Calu3 (cell line): ENCODE measurements at regions of chr1 and their contacts with region 1.

Region 1: DNA sequence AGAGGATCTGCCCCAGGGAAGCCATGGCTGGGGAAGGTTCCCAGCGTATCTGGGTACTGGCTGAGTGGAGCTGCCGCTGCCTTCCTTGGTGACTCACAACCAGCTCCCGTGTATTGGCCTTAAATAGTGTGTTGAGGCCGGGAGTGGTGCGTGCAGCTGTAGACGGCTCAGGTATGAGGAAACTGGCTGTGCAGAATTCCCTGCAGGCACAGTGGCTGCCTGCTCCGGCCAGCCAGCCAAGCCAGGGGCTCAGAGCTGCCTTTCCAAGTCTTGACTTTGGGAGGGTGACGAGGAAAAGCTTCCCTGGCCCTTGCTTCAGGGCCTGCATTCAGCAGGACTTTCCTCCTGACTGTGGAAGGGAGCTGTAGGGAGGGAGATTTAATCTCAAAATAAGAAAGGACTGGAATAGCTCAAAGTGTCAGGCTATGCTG is at the start of gene VTCN1:
- DNase-seq: peak; percentile 81
- H3K4me3 Mint-ChIP-seq: peak within 1 kb of the TSS; percentile 68
- H3K27ac Mint-ChIP-seq: peak within 1 kb of the TSS; percentile 72
- H3K4me1 Mint-ChIP-seq: peaks cover 49% of the 10 kb centered on the region
- H3K27me3 Mint-ChIP-seq: no peaks in the 10 kb centered on the region
- CTCF ChIP-seq: no peak
- total RNA-seq, gene VTCN1: 35.7 and 39.1 TPM in 2 replicates

Region 2: GRCh38 chr1:117128323-117129079 is 82.3 kb before region 1 on chr1:
- CTCF ChIA-PET with region 1: interaction called, 11 read pairs
- intact Hi-C with region 1: no loop called
- DNase-seq: no peak
- H3K4me3 Mint-ChIP-seq: no peak overlapping the region
- H3K27ac Mint-ChIP-seq: no peak overlapping the region
- H3K4me1 Mint-ChIP-seq: peaks cover 11% of the 10 kb centered on the region
- H3K27me3 Mint-ChIP-seq: no peaks in the 10 kb centered on the region
- CTCF ChIP-seq: peak; percentile 19

Region 3: GRCh38 chr1:117146570-117147346 is 64.1 kb before region 1 on chr1:
- CTCF ChIA-PET with region 1: interaction called, 5 read pairs
- intact Hi-C with region 1: loop called (anchors 10 kb)
- DNase-seq: peak; percentile 63
- H3K4me3 Mint-ChIP-seq: peak overlapping the region; percentile 59
- H3K27ac Mint-ChIP-seq: peak overlapping the region; percentile 95
- H3K4me1 Mint-ChIP-seq: peaks cover 54% of the 10 kb centered on the region
- H3K27me3 Mint-ChIP-seq: no peaks in the 10 kb centered on the region
- CTCF ChIP-seq: no peak

Region 4: DNA sequence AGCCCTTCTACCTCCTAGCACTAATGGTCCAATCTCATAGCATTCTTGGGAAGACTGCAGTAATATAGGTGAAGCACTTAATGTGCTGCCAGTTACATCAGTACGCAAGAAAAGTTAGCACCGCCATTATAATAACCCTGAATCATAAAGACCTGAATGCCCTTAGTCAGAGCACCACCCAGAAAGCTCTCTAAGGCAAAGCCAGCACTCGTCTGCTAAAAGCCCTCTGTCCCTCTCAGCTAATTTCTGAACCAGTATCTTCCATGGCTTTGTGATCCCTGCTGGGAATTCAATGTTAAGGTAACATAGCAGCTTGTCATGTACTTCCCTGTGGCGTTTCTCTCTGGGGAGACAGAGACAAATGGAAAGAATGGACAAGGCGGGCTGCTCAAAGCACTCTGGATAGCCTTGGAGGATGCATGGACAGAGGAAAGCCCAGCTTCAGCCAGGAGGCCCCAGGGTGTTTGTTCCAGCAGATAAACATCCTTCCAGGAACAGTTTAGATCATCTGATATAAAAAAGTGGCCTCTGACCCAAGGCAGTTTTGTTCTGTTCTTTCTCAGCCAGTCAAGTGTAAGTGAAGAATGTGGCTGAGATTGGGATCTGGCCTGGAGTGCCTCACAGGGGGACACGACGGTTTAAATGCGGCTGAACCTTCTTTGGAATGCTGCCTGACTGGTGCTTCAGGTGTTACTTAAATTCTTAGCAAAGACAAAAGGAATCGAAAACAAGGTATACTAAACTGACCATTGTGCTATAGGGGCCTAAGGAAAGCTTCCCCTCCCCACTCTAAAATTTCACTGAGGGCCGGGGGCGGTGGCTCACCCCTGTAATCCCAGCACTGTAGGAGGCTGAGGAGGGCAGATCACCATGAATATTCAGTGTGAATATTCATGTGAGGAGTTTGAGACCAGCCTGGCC is 57.9 kb after region 1 on chr1:
- CTCF ChIA-PET with region 1: no interaction called
- intact Hi-C with region 1: loop called (anchors 10 kb)
- DNase-seq: peak; percentile 50
- H3K4me3 Mint-ChIP-seq: no peak overlapping the region
- H3K27ac Mint-ChIP-seq: peak overlapping the region; percentile 30
- H3K4me1 Mint-ChIP-seq: peaks cover 28% of the 10 kb centered on the region
- H3K27me3 Mint-ChIP-seq: no peaks in the 10 kb centered on the region
- CTCF ChIP-seq: no peak